OCI-LY7 (cell line): ENCODE measurements at regions of chr13 and their contacts with region 1.

Region 1: DNA sequence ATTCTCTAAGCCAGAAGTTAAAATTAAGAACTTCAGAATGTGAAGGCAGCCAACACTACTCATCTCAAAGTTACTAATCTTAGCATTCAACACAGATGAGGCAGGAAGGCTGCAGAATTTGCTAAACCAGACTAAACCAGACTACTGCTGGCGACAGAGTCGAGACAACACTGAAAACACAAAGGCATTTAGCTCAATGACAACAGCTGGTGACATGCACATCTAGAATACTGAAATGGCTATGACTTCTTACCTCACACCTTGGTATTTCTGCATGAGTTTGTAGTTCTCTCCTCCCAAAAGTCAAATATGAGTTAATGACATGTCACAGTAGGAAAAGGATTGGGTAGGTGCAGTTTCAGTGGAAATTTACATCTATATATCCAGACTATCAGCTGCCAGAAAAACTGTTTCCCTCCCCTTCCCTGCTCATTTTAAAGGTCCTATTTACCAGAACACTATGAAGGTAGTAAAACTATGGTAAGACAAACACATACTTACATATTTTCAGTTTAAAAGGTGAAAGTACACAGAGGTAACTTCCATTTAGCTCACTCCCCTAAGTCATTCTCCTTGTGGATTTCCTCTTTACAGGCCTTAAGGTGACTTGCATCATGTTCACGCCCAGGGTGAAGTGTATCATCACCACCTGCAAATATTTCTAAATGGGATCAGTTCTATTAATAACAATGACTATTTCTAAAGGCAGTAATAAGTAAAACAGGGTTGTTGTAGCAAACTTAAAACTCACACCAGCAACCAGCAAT is 21.4 kb downstream of the FOXO1 start:
- DNase-seq: peak; percentile 56
- H3K4me3 ChIP-seq: peak overlapping the region; percentile 37
- H3K27ac ChIP-seq: peak overlapping the region; percentile 45
- H3K4me1 ChIP-seq: peaks cover 94% of the 10 kb centered on the region
- CTCF ChIP-seq: no peak

Region 2: DNA sequence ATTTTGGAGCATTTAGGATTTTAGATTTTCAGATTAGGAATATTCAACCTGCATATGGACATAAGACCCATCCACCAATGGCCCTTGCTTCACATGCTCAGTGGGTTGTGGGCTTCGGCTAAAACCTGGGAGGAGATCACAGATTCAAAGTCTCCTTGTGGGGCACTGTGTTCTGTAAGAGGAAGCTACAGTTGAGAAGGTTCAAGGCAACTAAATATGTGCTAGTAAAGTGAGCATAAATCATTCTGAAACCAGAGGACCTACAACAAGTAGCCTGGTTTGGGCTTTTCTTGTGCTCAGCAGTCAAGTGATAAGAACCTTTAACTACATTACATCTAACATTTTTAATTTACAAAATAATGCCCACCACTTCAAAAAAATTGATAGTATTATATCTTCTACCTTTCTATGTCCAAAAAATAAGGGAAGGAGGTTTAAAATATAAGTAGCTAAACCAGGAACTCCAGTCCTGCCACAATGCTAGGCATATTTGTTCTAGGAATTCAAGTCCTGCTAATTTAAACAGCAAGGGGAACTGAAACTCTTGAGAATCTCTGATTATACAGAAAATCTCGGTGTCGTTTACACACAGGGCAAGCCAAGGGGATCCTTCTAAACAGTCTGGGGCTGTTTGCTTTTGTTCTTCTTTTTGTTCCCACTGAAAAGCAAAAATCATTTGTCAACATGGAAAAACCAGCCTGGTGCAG is 15.2 kb before region 1 on chr13:
- CTCF ChIA-PET with region 1: interaction called, 3 read pairs
- POLR2A ChIA-PET with region 1: interaction called, 19 read pairs
- intact Hi-C with region 1: no loop called
- DNase-seq: peak; percentile 78
- H3K4me3 ChIP-seq: peak overlapping the region; percentile 56
- H3K27ac ChIP-seq: peak overlapping the region; percentile 77
- H3K4me1 ChIP-seq: peaks cover 68% of the 10 kb centered on the region
- CTCF ChIP-seq: peak; percentile 34; the same call in 1 of the 2 replicates